ENCODE measurements at regions of chr9 and their contacts with region 1.

Region 1: DNA sequence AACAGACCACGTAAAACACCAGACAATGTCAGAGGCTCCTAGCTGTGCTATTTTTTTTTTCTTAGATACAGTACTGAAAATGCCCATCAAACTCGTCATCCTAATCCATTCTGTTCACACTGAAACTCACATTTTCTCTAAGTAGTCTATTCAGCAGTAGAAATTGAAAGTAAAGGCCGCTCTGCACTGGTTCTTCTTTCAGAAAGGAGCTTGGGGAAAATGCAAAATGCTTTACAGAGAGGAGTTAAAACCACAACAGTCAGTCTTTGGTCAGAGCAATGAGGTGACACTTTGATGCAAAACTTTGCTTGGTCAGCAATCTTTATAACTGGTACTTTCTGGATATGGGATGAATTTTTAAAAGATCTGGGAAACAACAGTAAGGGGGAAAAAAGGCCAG is 43.8 kb upstream of the SUSD1 start:
- DNase-seq: peak; percentile 9
- H3K4me3 Mint-ChIP-seq: peak overlapping the region; percentile 19
- H3K27ac Mint-ChIP-seq: peak overlapping the region; percentile 70
- H3K4me1 Mint-ChIP-seq: peaks cover 26% of the 10 kb centered on the region
- H3K27me3 Mint-ChIP-seq: no peaks in the 10 kb centered on the region

Region 2: DNA sequence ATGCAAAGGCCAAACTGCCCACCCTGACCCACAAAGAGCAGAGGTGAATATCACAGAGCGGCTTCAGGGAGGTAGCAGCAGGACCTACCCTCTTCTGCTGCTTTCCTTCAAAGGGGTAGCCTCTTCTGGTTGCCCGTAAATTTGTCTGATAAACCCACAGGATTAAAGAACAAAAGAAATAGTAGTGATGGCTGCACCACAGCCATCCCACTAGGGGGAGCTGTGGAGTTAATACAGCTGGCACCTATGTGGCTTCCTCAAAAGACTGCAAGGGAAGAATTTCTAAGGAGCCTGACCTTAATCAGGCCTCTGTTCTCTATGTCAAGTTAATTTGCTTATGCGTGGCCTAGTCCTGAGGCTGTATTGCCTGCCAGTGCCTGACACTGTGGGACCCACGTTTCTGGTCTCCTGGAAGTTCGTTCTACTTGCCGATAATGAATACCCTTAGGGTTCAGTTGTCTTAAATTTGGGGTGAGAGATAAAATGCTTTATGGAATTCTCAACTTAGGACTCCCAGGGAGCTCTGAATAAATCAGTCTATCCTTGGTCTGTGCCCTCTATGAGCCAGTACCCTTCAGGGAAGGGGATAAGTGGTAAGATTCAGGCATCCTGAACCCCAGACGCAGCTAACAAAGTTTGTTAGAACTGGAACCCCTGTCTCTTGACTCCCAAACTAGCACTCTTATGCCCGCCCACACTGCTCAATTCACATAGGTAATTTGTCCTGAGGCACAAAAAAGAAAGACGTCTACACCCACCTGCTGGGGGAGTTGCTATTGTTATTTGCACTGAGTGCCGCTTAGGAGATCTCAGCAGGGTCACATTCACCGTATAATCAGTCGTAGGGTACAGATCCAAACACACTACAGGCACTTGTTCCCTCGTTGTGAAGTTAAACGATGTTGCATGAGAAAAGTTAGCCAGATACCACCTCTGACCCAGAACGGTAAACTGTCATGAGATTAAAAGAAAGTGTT is 120.9 kb before region 1 on chr9:
- intact Hi-C with region 1: loop called (anchors 2 kb)
- DNase-seq: peak; percentile 54
- H3K4me3 Mint-ChIP-seq: no peak overlapping the region
- H3K27ac Mint-ChIP-seq: no peak overlapping the region
- H3K4me1 Mint-ChIP-seq: peaks cover 32% of the 10 kb centered on the region
- H3K27me3 Mint-ChIP-seq: peaks cover 2% of the 10 kb centered on the region

Region 3: DNA sequence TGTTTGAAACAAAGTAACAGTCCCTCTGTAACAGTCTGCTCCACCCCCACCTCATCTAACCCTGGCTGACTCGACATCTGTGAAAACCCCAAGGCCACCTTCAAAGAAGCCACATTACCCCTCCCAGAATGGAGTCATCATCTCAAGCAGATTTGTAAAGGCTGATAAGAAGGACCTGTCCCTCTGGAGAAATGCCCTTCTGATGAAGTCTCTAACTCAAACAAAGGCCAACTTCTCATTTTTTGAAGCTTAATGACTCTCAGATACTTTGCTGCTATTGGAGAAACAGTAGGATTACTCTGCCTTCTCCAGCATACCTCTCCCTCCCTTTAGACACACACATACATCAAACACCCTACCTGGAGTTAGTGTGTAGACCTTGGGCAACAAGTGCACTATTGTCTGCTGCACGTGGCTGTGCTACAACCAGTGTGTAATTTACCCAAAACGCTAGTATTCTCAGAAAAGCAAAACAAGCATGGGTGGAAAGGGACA is 38.5 kb before region 1 on chr9:
- intact Hi-C with region 1: loop called (anchors 1 kb)
- DNase-seq: peak; percentile 62
- H3K4me3 Mint-ChIP-seq: peak overlapping the region; percentile 19
- H3K27ac Mint-ChIP-seq: peak overlapping the region; percentile 66
- H3K4me1 Mint-ChIP-seq: peaks cover 64% of the 10 kb centered on the region
- H3K27me3 Mint-ChIP-seq: no peaks in the 10 kb centered on the region

Region 4: DNA sequence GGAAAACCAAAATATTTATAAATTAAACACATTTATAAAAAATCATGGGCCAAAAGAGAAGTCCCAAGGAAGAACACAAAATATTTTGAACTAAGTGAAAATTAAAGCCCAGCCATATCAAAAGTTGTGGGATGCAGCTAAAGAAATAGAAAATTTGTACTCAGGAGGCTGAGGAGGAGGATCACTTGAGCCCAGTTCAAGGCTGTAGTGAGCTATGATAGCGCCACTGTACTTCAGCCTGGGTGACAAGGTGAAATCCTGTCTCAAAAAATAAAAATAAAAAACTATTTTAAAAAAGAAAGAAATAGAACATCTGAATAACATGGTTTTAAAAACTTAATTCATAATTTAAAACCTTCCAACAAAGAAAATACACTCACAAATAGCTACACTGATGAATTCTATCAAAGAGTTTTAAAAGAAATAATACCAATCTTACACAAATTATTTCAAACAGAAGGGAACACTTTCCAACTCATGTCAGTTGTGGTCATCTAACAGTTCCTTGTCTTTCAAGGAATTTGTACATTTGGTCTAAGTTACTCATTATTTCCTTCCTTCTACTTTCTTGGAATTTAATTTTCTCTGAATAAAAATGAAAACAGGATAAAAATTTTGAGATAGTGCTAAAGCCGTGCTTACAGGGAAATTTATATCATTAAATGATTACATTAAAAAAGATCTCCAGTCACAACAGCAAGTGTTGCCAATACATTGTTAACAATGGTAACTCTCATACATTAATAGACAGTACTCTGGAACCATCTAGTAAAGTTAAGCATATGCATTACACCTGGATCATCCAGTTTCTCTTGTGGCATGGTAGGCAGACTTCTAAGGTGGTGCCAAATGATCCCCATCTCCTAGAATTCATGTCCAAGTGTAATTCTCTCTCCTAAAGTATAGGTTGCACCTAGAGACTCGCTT is 96.7 kb after region 1 on chr9:
- intact Hi-C with region 1: loop called (anchors 1 kb)
- DNase-seq: no peak
- H3K4me3 Mint-ChIP-seq: peak overlapping the region; percentile 46
- H3K27ac Mint-ChIP-seq: peak overlapping the region; percentile 79
- H3K4me1 Mint-ChIP-seq: peaks cover 52% of the 10 kb centered on the region
- H3K27me3 Mint-ChIP-seq: peaks cover 1% of the 10 kb centered on the region

Measured in activated T-helper 1 cell treated with anti-CD3 and anti-CD28 coated beads, Interleukin-12 subunit alpha, Interleukin-12 subunit beta, Interleukin-2, Interleukin-4 antibody, amounts not matched to agents 30 ng/mL and 10 ng/mL and 1 ng/mL, durations not matched to agents 14 hours and 24 hours and 36 hours (primary cell).